A673 (cell line): ENCODE measurements at regions of chr12 and their contacts with region 1.

Region 1: DNA sequence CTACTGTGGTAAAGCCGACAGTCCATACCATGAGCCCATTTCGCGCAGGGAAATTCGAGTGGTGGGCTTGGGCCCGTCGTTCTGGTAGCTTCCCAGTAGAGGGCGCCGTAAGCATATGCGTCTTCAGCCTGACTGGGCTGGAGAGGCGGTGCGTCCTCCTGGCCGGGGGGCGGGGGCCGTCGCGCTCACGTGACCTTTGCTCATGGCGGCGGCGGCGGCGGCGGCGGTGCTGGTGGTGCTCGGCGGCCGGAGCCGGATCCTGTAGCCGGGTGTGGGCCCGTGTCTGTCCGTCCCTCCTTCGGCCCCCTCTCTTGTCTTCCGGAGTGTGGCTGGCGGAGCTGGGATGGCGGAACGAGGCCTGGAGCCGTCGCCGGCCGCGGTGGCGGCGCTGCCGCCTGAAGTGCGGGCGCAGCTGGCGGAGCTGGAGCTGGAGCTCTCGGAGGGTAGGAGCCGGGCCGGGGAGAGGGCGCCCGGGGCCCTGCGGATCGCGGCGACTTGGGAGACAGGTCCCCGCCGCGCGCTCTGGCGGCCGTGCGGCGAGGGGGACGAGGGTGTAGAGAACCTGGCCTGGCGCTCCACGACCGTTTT is at the start of gene DIP2B:
- DNase-seq: peak; percentile 93
- H3K4me3 ChIP-seq: peak within 1 kb of the TSS; percentile 74
- H3K27ac ChIP-seq: peak within 1 kb of the TSS; percentile 93
- H3K4me1 ChIP-seq: peaks cover 33% of the 10 kb centered on the region
- H3K27me3 ChIP-seq: no peaks in the 10 kb centered on the region
- CTCF ChIP-seq: peak; percentile 84
- total RNA-seq, gene DIP2B: 37.2 and 40.5 TPM in 2 replicates

Region 2: GRCh38 chr12:50637870-50638481 is 133.1 kb after region 1 on chr12:
- CTCF ChIA-PET with region 1: interaction called, 14 read pairs
- POLR2A ChIA-PET with region 1: no interaction called
- intact Hi-C with region 1: loop called (anchors 1 kb)
- DNase-seq: peak; percentile 72
- H3K4me3 ChIP-seq: no peak overlapping the region
- H3K27ac ChIP-seq: no peak overlapping the region
- H3K4me1 ChIP-seq: peaks cover 42% of the 10 kb centered on the region
- H3K27me3 ChIP-seq: no peaks in the 10 kb centered on the region
- CTCF ChIP-seq: peak; percentile 81

Region 3: GRCh38 chr12:50734409-50735263 is 229.7 kb after region 1 on chr12:
- CTCF ChIA-PET with region 1: interaction called, 5 read pairs
- POLR2A ChIA-PET with region 1: no interaction called
- intact Hi-C with region 1: loop called (anchors 1 kb)
- DNase-seq: peak; percentile 72
- H3K4me3 ChIP-seq: no peak overlapping the region
- H3K27ac ChIP-seq: no peak overlapping the region
- H3K4me1 ChIP-seq: no peaks in the 10 kb centered on the region
- H3K27me3 ChIP-seq: no peaks in the 10 kb centered on the region
- CTCF ChIP-seq: peak; percentile 76

Region 4: DNA sequence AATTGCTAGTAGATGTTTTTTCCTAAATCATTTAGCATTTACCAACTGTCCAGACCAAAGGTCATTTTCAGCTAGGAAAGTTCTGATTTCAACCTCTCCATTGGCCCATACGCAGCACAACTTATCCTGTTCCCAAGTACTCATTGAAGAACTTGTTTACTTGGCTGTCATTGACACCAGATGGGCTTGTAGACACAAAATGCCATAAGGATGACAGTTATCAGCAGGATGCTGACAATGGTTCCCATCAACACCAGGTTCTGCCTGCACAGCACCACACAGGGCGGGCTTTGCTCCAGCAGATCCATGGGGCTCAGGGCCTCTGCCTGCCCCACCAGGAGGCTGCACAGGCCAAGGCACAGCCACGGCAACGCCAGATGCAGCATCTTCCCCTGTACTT is 301.3 kb after region 1 on chr12:
- CTCF ChIA-PET with region 1: no interaction called
- POLR2A ChIA-PET with region 1: no interaction called
- intact Hi-C with region 1: loop called (anchors 10 kb)
- DNase-seq: no peak
- H3K4me3 ChIP-seq: no peak overlapping the region
- H3K27ac ChIP-seq: no peak overlapping the region
- H3K4me1 ChIP-seq: no peaks in the 10 kb centered on the region
- H3K27me3 ChIP-seq: no peaks in the 10 kb centered on the region
- CTCF ChIP-seq: no peak

Region 5: GRCh38 chr12:51025836-51026638 is 521.1 kb after region 1 on chr12 and contains the start of gene SLC11A2:
- CTCF ChIA-PET with region 1: interaction called, 3 read pairs
- POLR2A ChIA-PET with region 1: no interaction called
- intact Hi-C with region 1: loop called (anchors 10 kb)
- DNase-seq: peak; percentile 97
- H3K4me3 ChIP-seq: peak within 1 kb of the TSS; percentile 92
- H3K27ac ChIP-seq: peak within 1 kb of the TSS; percentile 74
- H3K4me1 ChIP-seq: peaks cover 8% of the 10 kb centered on the region
- H3K27me3 ChIP-seq: no peaks in the 10 kb centered on the region
- CTCF ChIP-seq: no peak
- total RNA-seq, gene SLC11A2: 33.9 and 47.6 TPM in 2 replicates